B cell (primary cell): ENCODE measurements at regions of chr13 and their contacts with region 1.

Region 1: GRCh38 chr13:51803422-51804294 is at the start of gene DHRS12:
- DNase-seq: peak; percentile 95
- ATAC-seq: peak; percentile 84
- H3K4me3 ChIP-seq: peak within 1 kb of the TSS; percentile 64 to 94 (median 72)
- H3K4me3 Mint-ChIP-seq: peak within 1 kb of the TSS; percentile 99
- H3K27ac ChIP-seq: peak within 1 kb of the TSS; percentile 98
- H3K27ac Mint-ChIP-seq: peak within 1 kb of the TSS; percentile 100
- H3K4me1 ChIP-seq: peaks cover 19 to 27% of the 10 kb centered on the region in 2 donors
- H3K4me1 Mint-ChIP-seq: peaks cover 38% of the 10 kb centered on the region
- H3K27me3 ChIP-seq: no peaks in the 10 kb centered on the region
- H3K27me3 Mint-ChIP-seq: no peaks in the 10 kb centered on the region
- CTCF ChIP-seq: no peak
- total RNA-seq, gene DHRS12: 23.2 TPM in 2 replicates

Region 2: DNA sequence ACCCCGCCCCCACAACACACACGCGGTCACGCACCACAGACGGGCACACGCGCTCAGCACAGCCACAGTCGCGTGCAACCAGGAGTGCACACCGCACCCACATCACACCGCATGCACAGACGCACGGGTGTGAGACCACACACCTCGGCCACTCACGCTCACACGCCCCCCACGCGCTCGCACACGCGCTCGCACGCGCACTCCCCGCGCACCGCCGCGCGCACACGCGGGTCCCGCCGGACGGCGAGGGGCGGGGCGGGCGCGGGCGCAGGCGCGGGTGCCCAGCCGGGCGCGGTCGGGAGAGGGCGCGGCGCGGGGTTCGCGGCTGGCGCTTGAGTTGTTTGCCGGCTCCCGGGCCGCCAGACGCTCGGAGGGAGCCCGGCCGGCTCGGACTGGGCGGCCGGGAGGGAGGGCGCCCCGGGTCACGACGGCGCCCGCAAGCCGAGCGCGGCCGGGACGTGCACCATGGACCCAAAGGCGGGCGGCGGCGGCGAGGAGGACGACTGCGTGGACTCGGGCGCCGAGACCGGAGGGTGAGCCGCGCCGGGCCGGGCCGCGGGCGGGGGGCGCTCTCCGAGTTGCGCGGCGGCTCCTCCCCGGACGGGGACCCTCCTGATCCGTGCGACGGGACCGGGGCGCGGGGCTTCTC is 581.5 kb before region 1 on chr13 and contains the start of gene FAM124A:
- CTCF ChIA-PET with region 1: no interaction called
- POLR2A ChIA-PET with region 1: no interaction called
- intact Hi-C with region 1: loop called (anchors 10 kb)
- DNase-seq: peak; percentile 65
- ATAC-seq: peak; percentile 76
- H3K4me3 ChIP-seq: peak within 1 kb of the TSS; percentile 31 to 65 (median 52)
- H3K4me3 Mint-ChIP-seq: peak within 1 kb of the TSS; percentile 86
- H3K27ac ChIP-seq: no peak within 1 kb of the TSS
- H3K27ac Mint-ChIP-seq: no peak within 1 kb of the TSS
- H3K4me1 ChIP-seq: peaks cover 10 to 14% of the 10 kb centered on the region in 2 donors
- H3K4me1 Mint-ChIP-seq: peaks cover 3% of the 10 kb centered on the region
- H3K27me3 ChIP-seq: peaks cover 0 to 38% (median 16%) of the 10 kb centered on the region in 4 experiments
- H3K27me3 Mint-ChIP-seq: peaks cover 55% of the 10 kb centered on the region
- CTCF ChIP-seq: peak; percentile 13
- total RNA-seq, gene FAM124A: 0.15 and 0.39 TPM in 2 replicates